Adrenal gland (tissue), 19 donors: ENCODE measurements at regions of chr9 and their contacts with region 1.

Region 1: GRCh38 chr9:72577212-72577753 is 55.9 kb downstream of the TMC1 start:
- DNase-seq: peak in 4 of 7 donors; percentile 45 to 63 (median 54)
- H3K4me3 ChIP-seq: no peak overlapping the region
- H3K27ac ChIP-seq: peak overlapping the region; percentile 23 to 84 (median 63)
- H3K4me1 ChIP-seq: peaks cover 24 to 56% of the 10 kb centered on the region in 2 donors
- H3K27me3 ChIP-seq: no peaks in the 10 kb centered on the region
- CTCF ChIP-seq: no peak
- POLR2A ChIP-seq: no peak

Region 2: GRCh38 chr9:72526901-72527800 is 50.1 kb before region 1 on chr9:
- intact Hi-C with region 1: loop called in 1 of 2 experiments (anchors 10 kb)
- DNase-seq: peak; percentile 82 to 93 (median 90)
- H3K4me3 ChIP-seq: peak overlapping the region in 1 of 4 donors; percentile 19
- H3K27ac ChIP-seq: peak overlapping the region; percentile 2 to 80 (median 63)
- H3K4me1 ChIP-seq: peaks cover 15 to 32% of the 10 kb centered on the region in 2 donors
- H3K27me3 ChIP-seq: no peaks in the 10 kb centered on the region
- CTCF ChIP-seq: no peak
- POLR2A ChIP-seq: peak in 1 of 2 donors; percentile 84